Right lobe of liver (tissue), 6 donors: ENCODE measurements at regions of chr18 and their contacts with region 1.

Region 1: DNA sequence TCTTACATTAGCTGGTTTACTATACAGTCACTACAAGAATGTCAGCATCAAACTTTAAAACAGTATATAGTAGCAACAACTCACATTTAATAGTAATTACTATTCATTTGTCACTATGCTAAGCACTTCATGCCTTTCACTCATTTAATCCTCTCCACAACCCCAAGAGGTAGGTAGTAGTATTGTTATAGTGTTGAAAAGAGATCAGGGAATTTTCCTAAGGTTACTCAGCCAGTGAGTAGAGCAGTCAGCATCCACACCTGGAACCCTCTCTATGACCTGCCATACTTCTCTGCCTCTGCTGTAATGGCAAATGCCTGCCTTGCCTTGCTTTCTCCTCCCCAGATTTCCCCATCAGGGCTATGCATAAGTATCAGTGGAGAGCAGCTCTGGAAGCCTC is 24.8 kb downstream of the SKOR2 start:
- DNase-seq: no peak
- ATAC-seq: no peak
- H3K4me3 ChIP-seq: no peak overlapping the region
- H3K27ac ChIP-seq: no peak overlapping the region
- H3K4me1 ChIP-seq: no peaks in the 10 kb centered on the region
- H3K27me3 ChIP-seq: no peaks in the 10 kb centered on the region
- CTCF ChIP-seq: no peak
- POLR2A ChIP-seq: no peak

Region 2: GRCh38 chr18:47748847-47749599 is 522.4 kb after region 1 on chr18:
- intact Hi-C with region 1: loop called (anchors 5 to 10 kb)
- DNase-seq: peak; percentile 77 to 84 (median 80)
- ATAC-seq: peak; percentile 95 to 100 (median 97)
- H3K4me3 ChIP-seq: peak overlapping the region in 1 of 3 donors; percentile 11
- H3K27ac ChIP-seq: no peak overlapping the region
- H3K4me1 ChIP-seq: peaks cover 0 to 3% (median 0%) of the 10 kb centered on the region in 4 donors
- H3K27me3 ChIP-seq: peaks cover 0 to 9% of the 10 kb centered on the region in 2 donors
- CTCF ChIP-seq: peak in 3 of 4 donors; percentile 100
- POLR2A ChIP-seq: no peak

Region 3: GRCh38 chr18:47756364-47757016 is 529.8 kb after region 1 on chr18:
- intact Hi-C with region 1: loop called in 1 of 2 experiments (anchors 10 kb)
- DNase-seq: peak; percentile 62 to 68 (median 67)
- ATAC-seq: peak; percentile 85 to 93 (median 88)
- H3K4me3 ChIP-seq: no peak overlapping the region
- H3K27ac ChIP-seq: no peak overlapping the region
- H3K4me1 ChIP-seq: no peaks in the 10 kb centered on the region
- H3K27me3 ChIP-seq: no peaks in the 10 kb centered on the region
- CTCF ChIP-seq: peak; percentile 61 to 93 (median 90)
- POLR2A ChIP-seq: no peak